MCF 10A (cell line): ENCODE measurements at regions of chr1 and their contacts with region 1.

Region 1: GRCh38 chr1:15028102-15028501 is 125.4 kb upstream of the TMEM51 start:
- DNase-seq: no peak
- H3K4me3 Mint-ChIP-seq: no peak overlapping the region
- H3K27ac Mint-ChIP-seq: no peak overlapping the region
- H3K4me1 Mint-ChIP-seq: peaks cover 9% of the 10 kb centered on the region
- H3K27me3 Mint-ChIP-seq: no peaks in the 10 kb centered on the region
- CTCF ChIP-seq: no peak

Region 2: DNA sequence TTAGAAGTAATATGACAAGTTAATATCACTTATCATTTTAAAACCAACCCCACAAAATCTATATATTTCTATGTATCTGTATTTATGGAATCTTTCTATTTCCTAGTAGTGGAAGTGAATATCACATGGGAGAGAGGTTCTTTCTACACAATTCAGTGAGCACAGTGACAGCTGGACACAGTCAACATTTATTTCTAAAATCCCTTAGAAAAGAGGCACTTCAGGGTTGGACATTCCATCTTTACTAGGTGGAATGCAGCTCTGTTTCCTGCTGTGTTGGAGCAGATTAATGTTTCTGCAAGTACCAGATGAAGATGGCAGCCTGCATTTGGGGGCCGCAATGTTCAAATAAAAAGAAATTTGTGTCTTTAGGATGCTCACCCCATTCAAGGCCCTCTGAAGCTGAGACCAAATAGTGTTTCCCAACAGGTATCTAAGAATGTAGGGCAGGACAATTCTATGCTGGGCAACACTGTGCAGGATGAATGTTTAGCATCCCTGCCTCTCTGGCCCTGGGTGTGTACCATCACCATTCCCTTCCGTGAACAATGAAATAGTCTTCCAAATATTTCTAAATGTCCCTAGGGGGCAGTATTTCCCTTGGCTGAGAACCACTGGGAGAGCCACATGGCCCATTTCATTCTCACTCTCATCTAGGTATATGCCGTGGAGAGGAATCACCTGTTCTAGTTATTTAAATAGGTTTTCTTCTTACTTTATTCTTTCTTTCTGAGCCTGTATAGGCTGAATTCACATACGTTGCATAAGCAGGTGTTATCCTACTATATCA is 933.3 kb before region 1 on chr1:
- CTCF ChIA-PET with region 1: interaction called, 3 read pairs
- POLR2A ChIA-PET with region 1: no interaction called
- intact Hi-C with region 1: loop called (anchors 1 kb)
- DNase-seq: peak; percentile 43
- H3K4me3 Mint-ChIP-seq: no peak overlapping the region
- H3K27ac Mint-ChIP-seq: no peak overlapping the region
- H3K4me1 Mint-ChIP-seq: peaks cover 4% of the 10 kb centered on the region
- H3K27me3 Mint-ChIP-seq: no peaks in the 10 kb centered on the region
- CTCF ChIP-seq: peak; percentile 43

Region 3: GRCh38 chr1:14567056-14567455 is 461.0 kb before region 1 on chr1:
- CTCF ChIA-PET with region 1: interaction called, 3 read pairs
- POLR2A ChIA-PET with region 1: no interaction called
- intact Hi-C with region 1: loop called (anchors 10 kb)
- DNase-seq: peak; percentile 26
- H3K4me3 Mint-ChIP-seq: no peak overlapping the region
- H3K27ac Mint-ChIP-seq: no peak overlapping the region
- H3K4me1 Mint-ChIP-seq: no peaks in the 10 kb centered on the region
- H3K27me3 Mint-ChIP-seq: no peaks in the 10 kb centered on the region
- CTCF ChIP-seq: no peak

Region 4: DNA sequence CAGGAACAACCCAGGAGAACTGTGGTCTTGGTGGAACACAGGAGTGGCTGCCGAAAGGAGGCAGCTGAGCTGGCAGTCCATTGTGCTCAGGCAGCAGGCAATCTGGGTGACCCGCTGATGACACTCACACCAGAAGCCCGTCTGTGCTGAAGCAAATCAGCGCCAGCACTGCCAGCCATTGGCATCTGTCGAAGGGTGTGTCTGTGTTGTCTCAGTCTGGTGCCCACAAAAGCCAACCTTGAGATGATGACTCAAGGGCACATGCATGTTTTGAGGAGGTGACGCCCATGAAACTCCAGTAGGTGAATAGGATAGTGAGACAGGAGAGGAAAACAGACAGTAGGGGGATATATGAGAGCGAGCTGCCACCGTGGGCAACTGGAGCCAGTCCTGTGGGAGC is 262.3 kb before region 1 on chr1:
- CTCF ChIA-PET with region 1: interaction called, 3 read pairs
- POLR2A ChIA-PET with region 1: no interaction called
- intact Hi-C with region 1: loop called (anchors 5 kb)
- DNase-seq: peak; percentile 70
- H3K4me3 Mint-ChIP-seq: no peak overlapping the region
- H3K27ac Mint-ChIP-seq: peak overlapping the region; percentile 55
- H3K4me1 Mint-ChIP-seq: peaks cover 25% of the 10 kb centered on the region
- H3K27me3 Mint-ChIP-seq: no peaks in the 10 kb centered on the region
- CTCF ChIP-seq: no peak

Region 5: GRCh38 chr1:14924455-14925331 is 103.4 kb before region 1 on chr1:
- CTCF ChIA-PET with region 1: interaction called, 6 read pairs
- POLR2A ChIA-PET with region 1: no interaction called
- intact Hi-C with region 1: loop called (anchors 1 kb)
- DNase-seq: peak; percentile 45
- H3K4me3 Mint-ChIP-seq: peak overlapping the region; percentile 71
- H3K27ac Mint-ChIP-seq: no peak overlapping the region
- H3K4me1 Mint-ChIP-seq: peaks cover 12% of the 10 kb centered on the region
- H3K27me3 Mint-ChIP-seq: no peaks in the 10 kb centered on the region
- CTCF ChIP-seq: peak; percentile 9

Region 6: DNA sequence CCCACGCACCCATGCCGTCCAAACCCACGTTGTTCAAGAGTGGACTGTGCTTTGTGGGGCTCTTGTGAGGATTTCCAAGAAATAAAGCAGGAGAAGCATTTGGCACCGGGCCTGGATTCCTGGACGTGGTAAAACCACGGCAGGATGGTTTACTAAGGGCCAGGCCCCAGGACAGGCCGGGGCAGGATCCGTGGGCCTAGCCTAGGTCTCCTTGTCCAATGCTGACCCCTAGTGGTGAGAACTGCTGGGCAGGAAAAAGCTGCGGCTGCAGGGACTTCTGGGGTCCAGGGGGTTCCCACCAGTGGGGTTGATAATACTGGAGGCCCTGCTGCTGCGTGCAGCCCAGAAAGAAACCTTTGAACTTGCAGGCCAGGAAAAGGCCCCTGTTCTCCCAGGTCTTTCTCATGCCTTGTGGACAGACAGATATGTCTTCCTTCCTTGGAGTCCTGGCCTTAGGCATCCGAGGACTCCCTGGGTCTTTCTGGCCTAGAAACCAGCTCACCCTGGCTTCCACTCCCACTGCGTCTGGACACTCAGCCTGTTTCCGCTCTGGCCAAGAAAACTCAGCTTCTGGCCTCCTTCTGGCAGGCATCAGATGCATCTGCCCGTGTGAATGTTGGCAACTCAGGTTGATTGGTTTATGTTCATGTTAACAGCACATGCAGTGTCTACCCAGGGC is 18.5 kb after region 1 on chr1:
- CTCF ChIA-PET with region 1: interaction called, 11 read pairs
- POLR2A ChIA-PET with region 1: interaction called, 3 read pairs
- intact Hi-C with region 1: no loop called
- DNase-seq: peak; percentile 80
- H3K4me3 Mint-ChIP-seq: no peak overlapping the region
- H3K27ac Mint-ChIP-seq: no peak overlapping the region
- H3K4me1 Mint-ChIP-seq: no peaks in the 10 kb centered on the region
- H3K27me3 Mint-ChIP-seq: no peaks in the 10 kb centered on the region
- CTCF ChIP-seq: peak; percentile 95

Region 7: DNA sequence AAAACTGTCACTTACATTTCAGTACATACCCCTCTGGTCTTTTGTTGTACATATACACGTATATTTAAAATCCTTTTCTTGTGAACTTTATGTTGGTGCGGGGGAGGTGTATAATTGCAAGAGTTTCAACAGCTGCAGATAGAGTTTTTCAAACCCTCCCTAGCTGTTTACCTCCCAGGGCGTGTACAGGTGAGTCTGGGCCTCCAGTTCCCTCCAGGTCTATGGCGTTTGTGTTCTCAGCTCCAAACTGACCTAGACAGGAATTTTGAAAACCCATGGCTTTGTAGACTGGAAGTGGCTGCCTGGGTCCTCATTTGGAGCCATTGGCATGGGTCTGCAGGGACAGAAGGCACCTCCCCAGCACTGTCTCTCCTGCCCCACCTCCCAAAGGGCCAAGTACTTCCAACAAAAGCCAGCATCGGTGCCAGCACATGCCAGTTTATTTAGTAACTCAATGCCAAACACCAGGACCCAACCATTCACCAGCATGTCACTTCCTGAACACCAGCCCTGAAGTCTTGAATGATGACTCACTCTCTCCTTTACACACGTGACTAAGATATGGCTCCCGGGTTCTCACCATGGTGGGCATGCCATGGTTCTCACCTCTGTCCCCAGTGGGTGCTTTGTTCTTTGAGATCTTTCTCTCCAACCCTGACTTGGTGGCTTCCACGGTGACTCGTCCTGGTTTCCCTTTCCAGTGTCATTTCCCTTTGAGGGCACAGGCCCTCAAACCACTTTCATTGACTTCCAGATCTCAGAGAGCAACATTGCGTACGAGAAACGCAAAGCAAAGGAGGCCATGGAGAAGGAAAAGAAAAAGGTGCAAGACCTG is 324.2 kb after region 1 on chr1:
- CTCF ChIA-PET with region 1: no interaction called
- POLR2A ChIA-PET with region 1: no interaction called
- intact Hi-C with region 1: no loop called
- DNase-seq: peak; percentile 97
- H3K4me3 Mint-ChIP-seq: peak overlapping the region; percentile 36
- H3K27ac Mint-ChIP-seq: peak overlapping the region; percentile 93
- H3K4me1 Mint-ChIP-seq: peaks cover 51% of the 10 kb centered on the region
- H3K27me3 Mint-ChIP-seq: no peaks in the 10 kb centered on the region
- CTCF ChIP-seq: no peak